GM18951 (cell line): ENCODE measurements at regions of chr7 and their contacts with region 1.

Region 1: DNA sequence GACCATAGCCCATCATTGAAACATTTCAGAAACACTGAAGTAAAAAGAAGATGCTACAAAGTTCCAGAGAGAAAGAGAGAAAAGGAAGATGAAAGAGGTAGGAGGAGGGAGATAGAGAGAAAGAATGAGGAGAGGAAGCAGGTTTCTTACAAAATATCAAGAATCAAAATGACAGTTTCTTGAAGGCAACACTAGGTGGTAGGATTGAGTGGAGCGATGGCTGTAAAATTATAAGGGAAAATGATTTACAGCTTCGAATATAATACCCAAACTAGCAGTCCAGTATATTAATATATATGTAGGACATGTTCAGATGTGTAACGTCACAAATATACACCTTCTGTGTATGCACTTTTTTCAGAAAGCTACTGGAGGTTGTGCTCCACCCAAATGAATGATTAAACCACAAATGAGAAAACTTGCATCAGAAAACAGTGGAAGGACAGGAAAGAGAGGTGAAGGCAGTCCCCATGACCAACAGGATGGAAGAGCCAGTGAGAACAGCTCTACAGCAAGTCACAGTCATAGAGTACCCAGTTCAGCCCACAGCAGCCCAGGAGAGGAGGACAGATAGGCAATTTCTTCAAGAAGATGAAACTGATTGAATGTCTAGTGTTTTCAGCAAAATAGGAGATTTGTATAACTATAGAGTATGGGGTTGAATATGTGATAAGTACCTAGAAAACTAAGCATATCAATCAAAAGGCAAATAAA is 151.5 kb upstream of the TARP start:
- POLR2A ChIP-seq: no peak

Region 2: GRCh38 chr7:37728757-37729156 is 696.1 kb before region 1 on chr7:
- in situ Hi-C with region 1: no loop called
- POLR2A ChIP-seq: no peak

Region 3: GRCh38 chr7:39504963-39505362 is 1080.1 kb after region 1 on chr7:
- in situ Hi-C with region 1: loop called (anchors 25 kb)
- POLR2A ChIP-seq: no peak